ENCODE measurements at regions of chr2 and their contacts with region 1.

Region 1: GRCh38 chr2:230793572-230794359 is 71.0 kb upstream of the ITM2C start:
- DNase-seq: peak; percentile 97
- H3K4me3 ChIP-seq: peak overlapping the region in 1 of 3 experiments; percentile 9
- H3K27ac ChIP-seq: peak overlapping the region; percentile 93
- H3K4me1 ChIP-seq: peaks cover 54% of the 10 kb centered on the region
- H3K27me3 ChIP-seq: no peaks in the 10 kb centered on the region
- CTCF ChIP-seq: no peak

Region 2: DNA sequence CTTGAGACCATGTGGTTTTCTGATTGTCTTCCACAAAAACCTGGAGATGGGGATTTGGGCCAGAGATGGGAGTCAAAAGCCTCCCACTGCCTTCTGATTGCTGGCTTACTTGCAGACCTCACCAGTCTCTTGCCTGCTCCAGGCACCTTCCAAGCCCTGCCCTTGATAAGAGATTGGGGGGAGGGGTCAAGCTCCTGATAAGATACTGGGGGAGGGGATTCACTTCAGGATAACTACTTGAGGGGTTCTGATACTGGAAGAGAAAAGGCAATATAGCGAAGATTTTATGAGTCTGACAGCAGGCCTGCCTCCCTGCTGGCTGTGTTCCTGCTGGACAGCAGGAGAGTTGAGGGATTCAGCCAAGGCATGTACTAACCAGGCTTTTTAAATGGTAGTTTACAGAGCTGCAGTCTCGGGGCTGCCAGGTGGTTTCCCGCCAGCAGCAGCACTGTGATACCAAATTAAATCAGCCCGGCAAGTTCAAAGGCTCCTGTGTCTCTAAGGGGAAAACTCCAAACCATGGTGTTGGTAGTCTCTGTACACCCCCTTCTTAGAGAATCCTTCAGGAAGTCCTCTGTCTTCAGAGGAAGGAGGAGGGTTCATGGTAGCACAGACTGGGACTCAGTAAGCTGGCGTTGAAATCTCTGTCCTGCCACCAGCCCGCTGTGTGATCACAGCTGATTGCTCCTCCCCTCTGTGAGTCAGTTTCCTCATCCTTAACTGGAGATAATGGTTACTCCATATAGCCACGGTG is 813.2 kb before region 1 on chr2:
- CTCF ChIA-PET with region 1: no interaction called
- dilution Hi-C with region 1: no loop called
- in situ Hi-C with region 1: no loop called
- intact Hi-C with region 1: no loop called
- DNase-seq: peak; percentile 64
- H3K4me3 ChIP-seq: no peak overlapping the region
- H3K27ac ChIP-seq: no peak overlapping the region
- H3K4me1 ChIP-seq: no peaks in the 10 kb centered on the region
- H3K27me3 ChIP-seq: no peaks in the 10 kb centered on the region
- CTCF ChIP-seq: no peak

Region 3: GRCh38 chr2:230429513-230429912 is 364.3 kb before region 1 on chr2:
- CTCF ChIA-PET with region 1: no interaction called
- dilution Hi-C with region 1: no loop called
- in situ Hi-C with region 1: no loop called
- intact Hi-C with region 1: no loop called
- DNase-seq: no peak
- H3K4me3 ChIP-seq: no peak overlapping the region
- H3K27ac ChIP-seq: no peak overlapping the region
- H3K4me1 ChIP-seq: no peaks in the 10 kb centered on the region
- H3K27me3 ChIP-seq: no peaks in the 10 kb centered on the region
- CTCF ChIP-seq: no peak

Region 4: DNA sequence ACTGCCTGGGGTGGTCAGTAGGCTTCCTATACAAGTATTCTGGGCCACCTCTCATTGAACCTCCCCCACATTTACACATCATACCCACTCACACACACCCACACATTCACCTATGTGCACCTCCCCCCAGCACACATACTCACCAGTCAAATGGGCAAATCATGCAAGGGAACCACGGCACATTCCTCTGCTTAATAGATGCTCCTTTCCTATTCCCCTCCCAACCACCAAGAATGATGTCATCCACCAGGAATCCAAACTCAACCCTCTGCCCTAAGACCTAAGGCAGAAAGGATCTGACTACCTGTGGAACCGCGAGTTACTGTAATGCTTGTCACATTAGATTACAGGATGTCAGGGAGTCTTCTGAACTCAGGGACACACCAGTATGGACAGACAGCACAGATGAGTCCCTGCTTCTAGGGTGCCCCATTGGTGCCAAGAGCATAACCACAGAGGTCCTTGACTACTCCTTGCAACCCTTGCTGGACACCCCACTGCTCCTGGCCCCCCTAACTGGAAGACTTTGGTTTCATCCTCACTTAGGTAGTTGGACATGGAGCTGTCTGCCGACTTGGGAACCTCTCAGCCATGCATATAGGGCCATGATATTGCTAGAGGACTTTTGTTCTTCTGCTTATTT is 102.6 kb before region 1 on chr2:
- CTCF ChIA-PET with region 1: no interaction called
- dilution Hi-C with region 1: no loop called
- in situ Hi-C with region 1: no loop called
- intact Hi-C with region 1: loop called (anchors 5 kb)
- DNase-seq: peak; percentile 98
- H3K4me3 ChIP-seq: no peak overlapping the region
- H3K27ac ChIP-seq: peak overlapping the region; percentile 73
- H3K4me1 ChIP-seq: peaks cover 56% of the 10 kb centered on the region
- H3K27me3 ChIP-seq: no peaks in the 10 kb centered on the region
- CTCF ChIP-seq: no peak

Region 5: GRCh38 chr2:230712443-230713330 is 81.1 kb before region 1 on chr2 and contains the start of gene CAB39:
- CTCF ChIA-PET with region 1: interaction called, 3 read pairs
- dilution Hi-C with region 1: loop called (anchors 5 kb)
- in situ Hi-C with region 1: no loop called
- intact Hi-C with region 1: no loop called
- DNase-seq: peak; percentile 84
- H3K4me3 ChIP-seq: peak within 1 kb of the TSS; percentile 70 to 86 (median 84)
- H3K27ac ChIP-seq: peak within 1 kb of the TSS; percentile 79
- H3K4me1 ChIP-seq: peaks cover 20% of the 10 kb centered on the region
- H3K27me3 ChIP-seq: no peaks in the 10 kb centered on the region
- CTCF ChIP-seq: peak; percentile 55
- total RNA-seq, gene CAB39: 68.3 to 115 TPM

Region 6: GRCh38 chr2:230777721-230778120 is 16.0 kb before region 1 on chr2:
- CTCF ChIA-PET with region 1: interaction called, 14 read pairs
- dilution Hi-C with region 1: no loop called
- in situ Hi-C with region 1: no loop called
- intact Hi-C with region 1: loop called (anchors 1 kb)
- DNase-seq: peak; percentile 79
- H3K4me3 ChIP-seq: no peak overlapping the region
- H3K27ac ChIP-seq: peak overlapping the region; percentile 96
- H3K4me1 ChIP-seq: peaks cover 82% of the 10 kb centered on the region
- H3K27me3 ChIP-seq: no peaks in the 10 kb centered on the region
- CTCF ChIP-seq: no peak